ENCODE measurements at regions of chr1 and their contacts with region 1.

Region 1: GRCh38 chr1:106200711-106201110 is 855.8 kb upstream of the PRMT6 start:
- DNase-seq: no peak
- H3K4me3 ChIP-seq: no peak overlapping the region
- H3K4me3 Mint-ChIP-seq: no peak overlapping the region
- H3K27ac Mint-ChIP-seq: no peak overlapping the region
- H3K4me1 ChIP-seq: no peaks in the 10 kb centered on the region
- H3K4me1 Mint-ChIP-seq: no peaks in the 10 kb centered on the region
- H3K27me3 ChIP-seq: no peaks in the 10 kb centered on the region
- H3K27me3 Mint-ChIP-seq: no peaks in the 10 kb centered on the region
- CTCF ChIP-seq: no peak

Region 2: GRCh38 chr1:106254746-106255145 is 54.0 kb after region 1 on chr1:
- CTCF ChIA-PET with region 1: no interaction called
- POLR2A ChIA-PET with region 1: no interaction called
- intact Hi-C with region 1: loop called (anchors 10 kb)
- DNase-seq: no peak
- H3K4me3 ChIP-seq: no peak overlapping the region
- H3K4me3 Mint-ChIP-seq: no peak overlapping the region
- H3K27ac Mint-ChIP-seq: no peak overlapping the region
- H3K4me1 ChIP-seq: no peaks in the 10 kb centered on the region
- H3K4me1 Mint-ChIP-seq: no peaks in the 10 kb centered on the region
- H3K27me3 ChIP-seq: no peaks in the 10 kb centered on the region
- H3K27me3 Mint-ChIP-seq: no peaks in the 10 kb centered on the region
- CTCF ChIP-seq: no peak

Region 3: DNA sequence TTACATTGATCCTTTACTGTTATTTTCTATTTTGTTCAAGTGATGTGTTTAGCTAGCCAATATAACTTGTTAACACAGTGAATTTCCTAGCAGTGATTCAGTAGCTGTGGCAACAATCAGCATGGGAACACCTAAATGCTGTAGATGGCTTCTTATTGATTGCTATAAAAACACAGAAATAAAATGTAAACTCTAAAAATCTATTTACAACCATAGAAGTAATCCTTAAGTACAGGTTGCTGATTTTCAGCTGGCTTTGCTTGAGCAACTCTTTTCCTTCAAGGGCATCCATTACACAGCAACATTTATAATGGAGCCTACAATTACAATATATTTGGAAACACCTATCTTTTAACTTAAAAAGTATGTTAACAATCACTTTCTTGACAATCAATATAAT is 182.0 kb after region 1 on chr1:
- CTCF ChIA-PET with region 1: no interaction called
- POLR2A ChIA-PET with region 1: no interaction called
- intact Hi-C with region 1: no loop called
- DNase-seq: no peak
- H3K4me3 ChIP-seq: no peak overlapping the region
- H3K4me3 Mint-ChIP-seq: no peak overlapping the region
- H3K27ac Mint-ChIP-seq: no peak overlapping the region
- H3K4me1 ChIP-seq: no peaks in the 10 kb centered on the region
- H3K4me1 Mint-ChIP-seq: no peaks in the 10 kb centered on the region
- H3K27me3 ChIP-seq: no peaks in the 10 kb centered on the region
- H3K27me3 Mint-ChIP-seq: no peaks in the 10 kb centered on the region
- CTCF ChIP-seq: no peak